Activated CD4-positive, alpha-beta memory T cell treated with anti-CD3 and anti-CD28 coated beads for 36 hours (primary cell): ENCODE measurements at regions of chr3 and their contacts with region 1.

Region 1: GRCh38 chr3:125231895-125232294 is 19.3 kb upstream of the SLC12A8 start:
- DNase-seq: no peak
- H3K4me3 Mint-ChIP-seq: no peak overlapping the region
- H3K27ac Mint-ChIP-seq: peak overlapping the region; percentile 71
- H3K4me1 Mint-ChIP-seq: peaks cover 25% of the 10 kb centered on the region
- H3K27me3 Mint-ChIP-seq: no peaks in the 10 kb centered on the region

Region 2: DNA sequence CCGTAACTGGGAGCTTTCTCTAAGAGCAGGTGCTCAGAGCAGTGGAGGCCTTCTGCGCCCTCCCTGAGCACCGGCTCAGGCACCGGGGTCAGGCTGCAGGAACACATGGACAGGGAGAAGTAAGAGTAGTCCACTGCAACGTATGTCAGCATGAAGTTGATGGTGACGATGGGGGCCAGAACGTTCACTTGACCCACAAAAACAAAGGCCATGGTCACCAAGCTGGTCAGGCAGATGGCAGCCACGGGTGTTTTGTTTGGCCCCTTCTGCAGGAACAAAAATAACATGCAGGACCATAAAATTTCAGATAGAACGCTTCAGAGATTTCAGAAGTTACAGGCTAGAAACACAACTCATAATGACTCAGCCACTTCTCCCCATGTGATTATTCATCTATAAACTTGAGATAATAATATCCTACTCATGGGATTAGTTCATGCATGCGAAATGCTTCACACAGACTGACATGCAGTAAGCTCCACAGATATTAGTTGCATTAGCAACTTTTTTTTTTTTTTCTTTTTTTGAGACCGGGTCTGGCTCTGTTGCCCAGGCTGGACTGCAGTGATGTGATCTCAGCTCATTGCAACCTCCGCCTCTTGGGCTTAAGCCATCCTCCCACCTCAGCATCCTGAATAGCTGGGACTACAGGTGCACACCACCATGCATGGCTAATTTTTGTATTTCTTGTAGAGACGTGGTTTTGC is 123.9 kb before region 1 on chr3:
- CTCF ChIA-PET with region 1: no interaction called
- POLR2A ChIA-PET with region 1: no interaction called
- intact Hi-C with region 1: loop called (anchors 1 kb)
- DNase-seq: no peak
- H3K4me3 Mint-ChIP-seq: no peak overlapping the region
- H3K27ac Mint-ChIP-seq: no peak overlapping the region
- H3K4me1 Mint-ChIP-seq: peaks cover 26% of the 10 kb centered on the region
- H3K27me3 Mint-ChIP-seq: peaks cover 23% of the 10 kb centered on the region

Region 3: DNA sequence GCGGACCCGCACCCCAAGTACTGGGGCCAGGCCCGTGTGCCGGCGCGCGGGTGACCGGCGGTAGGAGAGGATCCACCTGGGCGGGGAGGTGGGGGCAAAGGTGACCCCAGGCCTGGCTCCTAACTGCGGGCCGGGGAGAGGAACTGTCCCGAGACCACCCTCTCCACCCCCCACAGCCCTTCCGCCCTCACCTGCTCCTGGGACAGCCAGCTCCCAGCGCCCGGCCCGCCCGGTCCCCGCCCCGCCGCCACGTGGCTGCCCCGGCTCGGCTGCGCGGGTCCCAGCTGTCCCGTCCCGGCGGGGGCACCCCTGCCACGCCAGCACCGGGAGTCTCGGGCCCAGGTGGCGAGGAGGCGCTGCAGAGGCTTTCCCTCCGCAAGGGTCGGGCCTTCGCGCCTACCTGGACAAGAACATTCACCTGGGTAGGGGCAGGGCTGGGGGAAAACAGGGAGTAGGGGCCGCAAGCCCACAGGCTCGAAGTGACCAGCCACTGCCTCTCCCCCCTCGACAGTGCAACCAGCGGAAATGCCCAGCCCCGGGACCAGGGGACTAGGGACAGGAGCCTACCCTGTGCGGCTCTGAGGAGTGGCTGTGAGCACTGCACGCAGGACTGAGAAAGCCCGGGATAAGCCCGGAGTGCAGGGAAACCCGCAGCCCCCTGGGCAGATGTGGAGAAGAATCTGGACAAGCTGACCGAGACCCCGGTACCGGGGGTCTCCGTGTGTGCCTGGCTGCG is 19.2 kb before region 1 on chr3 and contains the start of gene SLC12A8:
- CTCF ChIA-PET with region 1: no interaction called
- POLR2A ChIA-PET with region 1: no interaction called
- intact Hi-C with region 1: loop called (anchors 1 kb)
- DNase-seq: no peak
- H3K4me3 Mint-ChIP-seq: no peak within 1 kb of the TSS
- H3K27ac Mint-ChIP-seq: no peak within 1 kb of the TSS
- H3K4me1 Mint-ChIP-seq: peaks cover 16% of the 10 kb centered on the region
- H3K27me3 Mint-ChIP-seq: peaks cover 45% of the 10 kb centered on the region
- total RNA-seq, gene SLC12A8: 0.48 to 1.00 TPM

Region 4: GRCh38 chr3:125351814-125352456 is 120.0 kb after region 1 on chr3:
- CTCF ChIA-PET with region 1: no interaction called
- POLR2A ChIA-PET with region 1: interaction called, 3 read pairs
- intact Hi-C with region 1: loop called (anchors 5 kb)
- DNase-seq: no peak
- H3K4me3 Mint-ChIP-seq: no peak overlapping the region
- H3K27ac Mint-ChIP-seq: peak overlapping the region; percentile 72
- H3K4me1 Mint-ChIP-seq: peaks cover 65% of the 10 kb centered on the region
- H3K27me3 Mint-ChIP-seq: no peaks in the 10 kb centered on the region

Region 5: DNA sequence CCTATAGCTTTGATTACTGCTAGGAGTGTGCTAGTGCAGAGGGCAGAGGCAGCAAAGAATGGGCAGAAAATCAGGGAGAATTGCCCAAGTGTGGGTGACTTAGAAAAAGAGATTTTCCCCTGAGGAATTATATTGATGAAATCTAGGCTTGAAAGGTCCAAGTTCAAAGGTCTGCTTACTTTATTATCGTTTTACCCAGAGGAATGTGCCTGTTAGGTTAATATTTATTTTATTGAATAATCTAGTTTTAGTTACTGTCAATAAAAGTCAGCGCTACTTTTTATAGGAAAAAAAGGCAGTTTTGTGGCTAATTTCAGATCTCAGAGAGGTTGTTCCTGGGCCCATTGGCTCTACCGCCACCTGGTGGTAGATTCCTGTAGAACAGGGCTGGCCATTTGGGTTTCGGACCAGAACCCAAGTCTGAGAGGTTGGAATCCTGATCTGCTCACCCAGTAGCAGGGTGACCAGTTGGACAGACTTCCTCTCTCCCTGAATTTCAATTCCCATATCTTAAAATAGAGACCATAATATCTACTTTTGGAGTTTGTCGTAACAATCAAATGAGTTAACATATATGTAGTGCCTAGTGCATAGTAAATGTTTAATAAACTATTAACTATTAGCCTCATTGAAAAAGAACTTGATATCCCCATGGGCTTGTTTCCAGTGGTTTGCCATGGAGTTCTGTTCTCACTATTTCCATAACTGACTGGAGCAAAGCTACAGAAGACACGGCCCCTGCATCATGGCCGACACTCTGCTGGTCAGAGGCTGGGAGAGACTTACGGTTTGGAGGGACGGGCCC is 205.9 kb after region 1 on chr3:
- CTCF ChIA-PET with region 1: no interaction called
- POLR2A ChIA-PET with region 1: no interaction called
- intact Hi-C with region 1: loop called (anchors 1 kb)
- DNase-seq: peak; percentile 69
- H3K4me3 Mint-ChIP-seq: no peak overlapping the region
- H3K27ac Mint-ChIP-seq: no peak overlapping the region
- H3K4me1 Mint-ChIP-seq: peaks cover 10% of the 10 kb centered on the region
- H3K27me3 Mint-ChIP-seq: no peaks in the 10 kb centered on the region

Region 6: GRCh38 chr3:125585595-125586223 is 353.8 kb after region 1 on chr3:
- CTCF ChIA-PET with region 1: no interaction called
- POLR2A ChIA-PET with region 1: no interaction called
- intact Hi-C with region 1: loop called (anchors 10 kb)
- DNase-seq: peak; percentile 57
- H3K4me3 Mint-ChIP-seq: no peak overlapping the region
- H3K27ac Mint-ChIP-seq: no peak overlapping the region
- H3K4me1 Mint-ChIP-seq: peaks cover 23% of the 10 kb centered on the region
- H3K27me3 Mint-ChIP-seq: no peaks in the 10 kb centered on the region